ENCODE measurements at regions of chr4 and their contacts with region 1.

Region 1: GRCh38 chr4:6963139-6963611 is 53.5 kb downstream of the TBC1D14 start:
- DNase-seq: no peak
- H3K4me3 ChIP-seq: no peak overlapping the region
- H3K27me3 ChIP-seq: no peaks in the 10 kb centered on the region
- CTCF ChIP-seq: no peak

Region 2: GRCh38 chr4:6986781-6987587 is 23.8 kb after region 1 on chr4:
- CTCF ChIA-PET with region 1: interaction called, 3 read pairs
- POLR2A ChIA-PET with region 1: interaction called, 10 read pairs
- DNase-seq: no peak
- H3K4me3 ChIP-seq: peak overlapping the region; percentile 91
- H3K27me3 ChIP-seq: no peaks in the 10 kb centered on the region
- CTCF ChIP-seq: peak; percentile 15; the same call in 1 of the 2 replicates

Measured in BJ (cell line).